CD8-positive, alpha-beta T cell (primary cell): ENCODE measurements at regions of chr3 and their contacts with region 1.

Region 1: GRCh38 chr3:131381444-131382291 is at the start of gene NUDT16:
- DNase-seq: peak; percentile 92 to 97 (median 95)
- ATAC-seq: peak; percentile 96
- H3K4me3 ChIP-seq: peak within 1 kb of the TSS; percentile 86 to 94
- H3K4me3 Mint-ChIP-seq: peak within 1 kb of the TSS; percentile 96
- H3K27ac ChIP-seq: peak within 1 kb of the TSS; percentile 45 to 64
- H3K27ac Mint-ChIP-seq: peak within 1 kb of the TSS; percentile 91
- H3K4me1 ChIP-seq: peaks cover 13% of the 10 kb centered on the region
- H3K4me1 Mint-ChIP-seq: peaks cover 31% of the 10 kb centered on the region
- H3K27me3 ChIP-seq: no peaks in the 10 kb centered on the region
- H3K27me3 Mint-ChIP-seq: no peaks in the 10 kb centered on the region
- CTCF ChIP-seq: no peak
- total RNA-seq, gene NUDT16: 3.1 to 3.5 TPM

Region 2: GRCh38 chr3:131193641-131194238 is 187.9 kb before region 1 on chr3:
- CTCF ChIA-PET with region 1: no interaction called
- POLR2A ChIA-PET with region 1: no interaction called
- intact Hi-C with region 1: no loop called
- DNase-seq: no peak
- ATAC-seq: no peak
- H3K4me3 ChIP-seq: no peak overlapping the region
- H3K4me3 Mint-ChIP-seq: no peak overlapping the region
- H3K27ac ChIP-seq: no peak overlapping the region
- H3K27ac Mint-ChIP-seq: no peak overlapping the region
- H3K4me1 ChIP-seq: no peaks in the 10 kb centered on the region
- H3K4me1 Mint-ChIP-seq: no peaks in the 10 kb centered on the region
- H3K27me3 ChIP-seq: no peaks in the 10 kb centered on the region
- H3K27me3 Mint-ChIP-seq: no peaks in the 10 kb centered on the region
- CTCF ChIP-seq: no peak

Region 3: GRCh38 chr3:131361464-131362421 is 19.9 kb before region 1 on chr3:
- CTCF ChIA-PET with region 1: no interaction called
- POLR2A ChIA-PET with region 1: no interaction called
- intact Hi-C with region 1: no loop called
- DNase-seq: peak in 1 of 9 experiments; percentile 14
- ATAC-seq: no peak
- H3K4me3 ChIP-seq: peak overlapping the region in 1 of 2 experiments; percentile 33
- H3K4me3 Mint-ChIP-seq: peak overlapping the region; percentile 45
- H3K27ac ChIP-seq: no peak overlapping the region
- H3K27ac Mint-ChIP-seq: no peak overlapping the region
- H3K4me1 ChIP-seq: peaks cover 5% of the 10 kb centered on the region
- H3K4me1 Mint-ChIP-seq: peaks cover 9% of the 10 kb centered on the region
- H3K27me3 ChIP-seq: peaks cover 7 to 12% of the 10 kb centered on the region in 2 experiments
- H3K27me3 Mint-ChIP-seq: peaks cover 44% of the 10 kb centered on the region
- CTCF ChIP-seq: no peak

Region 4: GRCh38 chr3:131502530-131503245 is 121.0 kb after region 1 on chr3 and contains the start of gene MRPL3:
- CTCF ChIA-PET with region 1: no interaction called
- POLR2A ChIA-PET with region 1: no interaction called
- intact Hi-C with region 1: loop called (anchors 1 to 2 kb)
- DNase-seq: peak; percentile 67 to 92 (median 84)
- ATAC-seq: peak; percentile 88
- H3K4me3 ChIP-seq: peak within 1 kb of the TSS; percentile 74 to 95
- H3K4me3 Mint-ChIP-seq: peak within 1 kb of the TSS; percentile 97
- H3K27ac ChIP-seq: peak within 1 kb of the TSS; percentile 78 to 83
- H3K27ac Mint-ChIP-seq: peak within 1 kb of the TSS; percentile 95
- H3K4me1 ChIP-seq: peaks cover 27% of the 10 kb centered on the region
- H3K4me1 Mint-ChIP-seq: peaks cover 45% of the 10 kb centered on the region
- H3K27me3 ChIP-seq: no peaks in the 10 kb centered on the region
- H3K27me3 Mint-ChIP-seq: no peaks in the 10 kb centered on the region
- CTCF ChIP-seq: no peak
- total RNA-seq, gene MRPL3: 43.6 to 45.0 TPM